Astrocyte of the cerebellum (primary cell): ENCODE measurements at regions of chr3 and their contacts with region 1.

Region 1: GRCh38 chr3:141570068-141570467 is 83.2 kb downstream of the RASA2 start:
- DNase-seq: no peak
- H3K4me3 ChIP-seq: no peak overlapping the region
- CTCF ChIP-seq: no peak

Region 2: DNA sequence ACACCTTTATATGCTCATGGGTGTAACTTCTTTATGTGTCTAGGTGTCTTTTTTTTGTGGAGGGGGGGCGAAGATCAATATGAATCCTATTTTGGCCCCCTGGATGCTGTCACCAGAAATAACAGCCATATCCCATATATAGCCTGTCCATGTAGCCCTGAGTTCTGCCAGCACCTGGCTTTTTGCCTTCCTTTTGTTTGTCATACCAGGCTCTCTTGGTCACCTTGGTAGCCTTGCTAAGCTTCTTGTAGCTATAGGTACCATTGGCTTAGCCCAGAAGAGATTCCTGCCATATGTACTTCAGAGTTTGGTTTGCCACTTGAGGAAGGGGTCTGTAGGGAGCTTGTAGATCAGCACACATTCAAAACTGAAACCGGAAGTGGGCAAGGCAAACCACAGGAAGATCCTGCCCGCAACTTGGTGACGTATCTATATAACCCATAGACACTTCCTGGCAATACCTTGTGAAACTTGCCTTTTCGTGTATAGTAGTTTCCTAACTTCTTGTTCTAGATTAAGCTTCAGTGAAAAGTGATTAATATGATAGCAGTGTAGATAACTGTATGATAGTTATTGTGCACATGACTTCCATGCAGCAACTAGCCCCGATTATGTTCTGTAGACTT is 71.4 kb before region 1 on chr3:
- in situ Hi-C with region 1: no loop called
- DNase-seq: no peak
- H3K4me3 ChIP-seq: no peak overlapping the region
- CTCF ChIP-seq: no peak

Region 3: GRCh38 chr3:141663993-141664392 is 93.9 kb after region 1 on chr3:
- in situ Hi-C with region 1: no loop called
- DNase-seq: no peak
- H3K4me3 ChIP-seq: no peak overlapping the region
- CTCF ChIP-seq: no peak

Region 4: GRCh38 chr3:141986548-141987107 is 416.6 kb after region 1 on chr3:
- in situ Hi-C with region 1: loop called (anchors 5 kb)
- DNase-seq: no peak
- H3K4me3 ChIP-seq: no peak overlapping the region
- CTCF ChIP-seq: no peak